ENCODE measurements at regions of chr6 and their contacts with region 1.

Region 1: GRCh38 chr6:14159090-14159489 is 41.5 kb downstream of the CD83 start:
- H3K4me3 ChIP-seq: no peak overlapping the region
- H3K27ac ChIP-seq: no peak overlapping the region
- H3K4me1 ChIP-seq: no peaks in the 10 kb centered on the region
- CTCF ChIP-seq: no peak

Region 2: DNA sequence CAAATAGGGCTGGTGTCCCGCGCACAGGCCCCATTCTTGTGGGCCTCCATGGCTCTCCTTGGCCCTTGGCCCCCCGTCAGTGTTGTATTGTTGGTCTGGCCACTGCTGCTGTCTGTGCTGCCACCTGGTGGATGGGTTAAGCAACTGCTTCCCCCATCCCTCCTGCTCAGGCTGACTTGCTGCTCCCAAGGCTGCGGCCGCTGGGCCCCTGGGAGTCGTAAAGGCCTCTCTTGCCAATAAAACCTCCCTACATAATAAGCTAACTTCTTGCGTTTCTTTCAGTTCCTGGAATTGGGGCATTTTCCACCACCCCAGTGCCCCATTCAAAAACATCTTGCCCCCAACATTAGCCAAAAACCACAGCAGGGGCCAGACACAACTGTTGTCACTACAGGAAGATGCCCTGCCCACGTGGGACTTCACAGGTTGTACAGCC is 14.4 kb before region 1 on chr6:
- CTCF ChIA-PET with region 1: interaction called, 16 read pairs
- POLR2A ChIA-PET with region 1: no interaction called
- H3K4me3 ChIP-seq: no peak overlapping the region
- H3K27ac ChIP-seq: no peak overlapping the region
- H3K4me1 ChIP-seq: peaks cover 3% of the 10 kb centered on the region
- CTCF ChIP-seq: peak; percentile 87; the same call in 1 of the 2 replicates

Region 3: DNA sequence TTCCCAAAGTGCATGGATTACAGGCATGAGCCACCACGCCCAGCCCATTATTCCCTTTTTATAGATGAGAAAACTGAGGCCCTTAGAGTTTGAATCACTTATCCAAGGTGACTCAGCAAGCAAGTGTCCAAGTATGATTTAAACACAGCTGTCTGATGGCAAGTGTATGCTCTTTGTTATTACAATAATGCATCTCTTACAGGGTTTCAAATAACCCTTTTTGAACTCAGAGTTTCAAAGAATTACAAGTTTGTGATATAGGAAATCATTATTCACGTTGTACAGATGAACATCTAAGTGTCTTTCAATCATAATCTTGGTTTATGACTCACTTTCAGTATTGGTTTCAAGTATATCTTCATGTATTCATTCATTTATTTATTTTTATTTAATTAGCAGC is 21.5 kb after region 1 on chr6:
- CTCF ChIA-PET with region 1: no interaction called
- POLR2A ChIA-PET with region 1: no interaction called
- H3K4me3 ChIP-seq: no peak overlapping the region
- H3K27ac ChIP-seq: no peak overlapping the region
- H3K4me1 ChIP-seq: no peaks in the 10 kb centered on the region
- CTCF ChIP-seq: no peak